ENCODE measurements at regions of chr10 and their contacts with region 1.

Region 1: DNA sequence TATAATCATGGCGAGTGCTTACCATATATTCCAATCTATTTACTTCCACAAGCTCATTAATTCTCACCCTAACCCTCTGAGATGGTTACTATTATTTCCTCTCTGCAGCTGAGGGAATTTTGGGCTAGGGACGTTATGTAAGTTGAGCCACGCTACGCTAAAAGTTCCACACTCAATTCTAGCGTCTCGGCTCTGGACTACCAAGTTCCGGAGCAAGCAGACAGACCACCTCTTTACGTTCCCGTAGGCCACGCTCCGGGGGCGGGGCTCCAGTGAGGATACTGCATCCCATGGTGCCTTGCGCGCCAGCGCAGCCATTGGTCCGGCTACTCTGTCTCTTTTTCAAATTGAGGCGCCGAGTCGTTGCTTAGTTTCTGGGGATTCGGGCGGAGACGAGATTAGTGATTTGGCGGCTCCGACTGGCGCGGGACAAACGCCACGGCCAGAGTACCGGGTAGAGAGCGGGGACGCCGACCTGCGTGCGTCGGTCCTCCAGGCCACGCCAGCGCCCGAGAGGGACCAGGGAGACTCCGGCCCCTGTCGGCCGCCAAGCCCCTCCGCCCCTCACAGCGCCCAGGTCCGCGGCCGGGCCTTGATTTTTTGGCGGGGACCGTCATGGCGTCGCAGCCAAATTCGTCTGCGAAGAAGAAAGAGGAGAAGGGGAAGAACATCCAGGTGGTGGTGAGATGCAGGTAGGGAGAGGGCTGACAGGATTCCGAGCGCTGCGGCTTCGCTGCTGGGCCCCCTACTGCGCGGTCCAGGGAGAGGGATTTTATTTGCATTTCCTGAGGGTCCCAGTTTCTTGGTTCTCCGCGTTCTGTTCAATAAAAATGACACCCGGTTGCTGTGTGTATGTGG is at the start of gene KIF11:
- DNase-seq: peak; percentile 96
- ATAC-seq: peak; percentile 82
- H3K4me3 ChIP-seq: peak within 1 kb of the TSS; percentile 65 to 95 (median 84)
- H3K4me3 Mint-ChIP-seq: peak within 1 kb of the TSS; percentile 99
- H3K27ac ChIP-seq: peak within 1 kb of the TSS; percentile 82 to 92
- H3K27ac Mint-ChIP-seq: peak within 1 kb of the TSS; percentile 99
- H3K4me1 ChIP-seq: peaks cover 9 to 22% of the 10 kb centered on the region in 2 donors
- H3K4me1 Mint-ChIP-seq: peaks cover 41% of the 10 kb centered on the region
- H3K27me3 ChIP-seq: no peaks in the 10 kb centered on the region
- H3K27me3 Mint-ChIP-seq: no peaks in the 10 kb centered on the region
- CTCF ChIP-seq: no peak
- total RNA-seq, gene KIF11: 1.8 and 2.0 TPM in 2 replicates

Region 2: DNA sequence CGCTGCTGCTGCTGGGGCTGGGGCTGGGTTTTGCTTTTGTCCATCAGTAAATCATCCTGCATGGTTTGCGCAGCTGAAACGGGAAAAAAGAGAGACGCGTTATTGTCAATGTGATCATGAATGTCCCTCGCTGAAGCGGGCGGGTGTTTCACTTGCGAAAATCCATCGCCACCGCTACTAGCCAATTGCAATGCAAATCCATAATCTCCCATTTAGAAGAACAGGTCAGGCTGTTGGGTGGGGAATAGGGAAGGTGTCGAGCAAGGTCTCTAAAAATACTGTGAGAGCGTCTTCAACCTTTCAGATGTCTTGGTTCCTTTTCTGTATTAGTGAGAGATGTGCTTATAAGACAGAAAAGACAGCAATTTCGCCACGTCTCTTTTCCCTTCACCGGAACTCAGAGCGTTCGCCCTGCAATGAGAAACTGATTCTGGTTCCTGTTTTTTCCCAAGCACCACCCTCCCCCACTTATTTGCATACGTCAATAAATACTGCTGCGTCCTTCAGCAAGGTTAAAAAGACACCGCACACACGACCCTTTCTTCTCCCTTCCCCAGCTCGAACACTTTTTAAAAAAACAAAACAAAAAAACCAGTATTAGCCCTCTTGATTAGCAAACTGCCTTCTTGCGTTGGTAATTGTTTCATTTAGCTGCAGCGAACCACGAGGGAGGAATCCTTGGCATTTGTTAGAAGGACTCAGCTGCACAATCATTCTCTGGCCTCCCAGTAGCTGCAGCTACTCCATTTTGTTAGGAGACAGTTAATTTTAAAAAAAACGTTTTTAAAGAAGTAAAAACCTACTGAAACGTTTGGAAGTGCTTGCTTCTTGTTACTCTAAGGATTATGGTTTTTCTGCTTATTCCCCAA is 352.5 kb before region 1 on chr10:
- CTCF ChIA-PET with region 1: no interaction called
- POLR2A ChIA-PET with region 1: no interaction called
- intact Hi-C with region 1: loop called (anchors 1 kb)
- DNase-seq: peak; percentile 83
- ATAC-seq: peak; percentile 72
- H3K4me3 ChIP-seq: peak overlapping the region; percentile 63 to 99 (median 91)
- H3K4me3 Mint-ChIP-seq: peak overlapping the region; percentile 96
- H3K27ac ChIP-seq: peak overlapping the region; percentile 7 to 37
- H3K27ac Mint-ChIP-seq: peak overlapping the region; percentile 93
- H3K4me1 ChIP-seq: peaks cover 19 to 30% of the 10 kb centered on the region in 2 donors
- H3K4me1 Mint-ChIP-seq: peaks cover 47% of the 10 kb centered on the region
- H3K27me3 ChIP-seq: no peaks in the 10 kb centered on the region
- H3K27me3 Mint-ChIP-seq: no peaks in the 10 kb centered on the region
- CTCF ChIP-seq: no peak

Region 3: GRCh38 chr10:92544296-92544695 is 48.7 kb before region 1 on chr10:
- CTCF ChIA-PET with region 1: no interaction called
- POLR2A ChIA-PET with region 1: no interaction called
- intact Hi-C with region 1: no loop called
- DNase-seq: peak; percentile 17
- ATAC-seq: peak; percentile 54
- H3K4me3 ChIP-seq: no peak overlapping the region
- H3K4me3 Mint-ChIP-seq: no peak overlapping the region
- H3K27ac ChIP-seq: no peak overlapping the region
- H3K27ac Mint-ChIP-seq: no peak overlapping the region
- H3K4me1 ChIP-seq: peaks cover 5 to 11% of the 10 kb centered on the region in 2 donors
- H3K4me1 Mint-ChIP-seq: peaks cover 32% of the 10 kb centered on the region
- H3K27me3 ChIP-seq: no peaks in the 10 kb centered on the region
- H3K27me3 Mint-ChIP-seq: no peaks in the 10 kb centered on the region
- CTCF ChIP-seq: no peak

Region 4: GRCh38 chr10:92640110-92640509 is 47.1 kb after region 1 on chr10:
- CTCF ChIA-PET with region 1: no interaction called
- POLR2A ChIA-PET with region 1: no interaction called
- intact Hi-C with region 1: loop called (anchors 1 kb)
- DNase-seq: no peak
- ATAC-seq: no peak
- H3K4me3 ChIP-seq: no peak overlapping the region
- H3K4me3 Mint-ChIP-seq: no peak overlapping the region
- H3K27ac ChIP-seq: no peak overlapping the region
- H3K27ac Mint-ChIP-seq: no peak overlapping the region
- H3K4me1 ChIP-seq: no peaks in the 10 kb centered on the region
- H3K4me1 Mint-ChIP-seq: peaks cover 10% of the 10 kb centered on the region
- H3K27me3 ChIP-seq: no peaks in the 10 kb centered on the region
- H3K27me3 Mint-ChIP-seq: no peaks in the 10 kb centered on the region
- CTCF ChIP-seq: no peak

Region 5: DNA sequence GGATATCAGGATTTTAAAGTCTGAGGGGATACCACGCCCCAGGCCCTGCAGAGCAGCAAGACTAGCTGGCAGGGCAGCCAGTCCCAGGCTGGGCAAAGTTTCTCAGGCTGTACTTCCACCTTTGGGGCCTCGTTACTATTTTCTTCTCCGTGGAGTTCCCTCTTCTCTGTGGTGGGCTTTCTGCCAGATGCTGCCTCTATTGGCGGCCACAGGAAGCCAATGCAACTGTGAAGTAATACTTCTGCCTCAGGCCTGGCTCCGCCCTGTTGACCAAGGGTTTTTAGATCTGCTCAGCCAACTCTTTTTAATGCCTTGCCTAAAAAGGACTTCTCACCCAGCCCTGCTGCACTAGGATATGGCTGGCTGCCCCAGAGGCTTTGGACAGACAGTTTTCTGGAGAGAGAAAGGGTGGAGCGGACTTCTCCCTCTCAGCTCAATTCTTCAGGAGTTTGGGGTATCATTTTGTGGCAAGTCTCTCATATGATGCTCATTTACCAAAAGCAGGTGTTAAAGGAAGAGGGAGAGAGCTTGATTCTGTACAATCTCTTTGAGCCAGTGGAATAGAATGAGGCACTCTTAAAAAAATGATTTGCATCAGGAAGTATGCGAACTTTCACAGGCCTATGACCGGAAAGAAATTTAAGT is 164.2 kb after region 1 on chr10:
- CTCF ChIA-PET with region 1: no interaction called
- POLR2A ChIA-PET with region 1: no interaction called
- intact Hi-C with region 1: loop called (anchors 1 kb)
- DNase-seq: peak; percentile 86
- ATAC-seq: peak; percentile 66
- H3K4me3 ChIP-seq: peak overlapping the region; percentile 16 to 36 (median 29)
- H3K4me3 Mint-ChIP-seq: peak overlapping the region; percentile 75
- H3K27ac ChIP-seq: peak overlapping the region; percentile 84 to 87
- H3K27ac Mint-ChIP-seq: peak overlapping the region; percentile 97
- H3K4me1 ChIP-seq: peaks cover 65 to 73% of the 10 kb centered on the region in 2 donors
- H3K4me1 Mint-ChIP-seq: peaks cover 75% of the 10 kb centered on the region
- H3K27me3 ChIP-seq: no peaks in the 10 kb centered on the region
- H3K27me3 Mint-ChIP-seq: no peaks in the 10 kb centered on the region
- CTCF ChIP-seq: peak; percentile 42

Region 6: GRCh38 chr10:92880233-92880861 is 287.4 kb after region 1 on chr10:
- CTCF ChIA-PET with region 1: interaction called, 11 read pairs
- POLR2A ChIA-PET with region 1: no interaction called
- intact Hi-C with region 1: loop called (anchors 1 kb)
- DNase-seq: peak; percentile 70
- ATAC-seq: peak; percentile 39
- H3K4me3 ChIP-seq: no peak overlapping the region
- H3K4me3 Mint-ChIP-seq: no peak overlapping the region
- H3K27ac ChIP-seq: no peak overlapping the region
- H3K27ac Mint-ChIP-seq: no peak overlapping the region
- H3K4me1 ChIP-seq: peaks cover 0 to 12% of the 10 kb centered on the region in 2 donors
- H3K4me1 Mint-ChIP-seq: peaks cover 29% of the 10 kb centered on the region
- H3K27me3 ChIP-seq: no peaks in the 10 kb centered on the region
- H3K27me3 Mint-ChIP-seq: no peaks in the 10 kb centered on the region
- CTCF ChIP-seq: peak; percentile 78

Region 7: DNA sequence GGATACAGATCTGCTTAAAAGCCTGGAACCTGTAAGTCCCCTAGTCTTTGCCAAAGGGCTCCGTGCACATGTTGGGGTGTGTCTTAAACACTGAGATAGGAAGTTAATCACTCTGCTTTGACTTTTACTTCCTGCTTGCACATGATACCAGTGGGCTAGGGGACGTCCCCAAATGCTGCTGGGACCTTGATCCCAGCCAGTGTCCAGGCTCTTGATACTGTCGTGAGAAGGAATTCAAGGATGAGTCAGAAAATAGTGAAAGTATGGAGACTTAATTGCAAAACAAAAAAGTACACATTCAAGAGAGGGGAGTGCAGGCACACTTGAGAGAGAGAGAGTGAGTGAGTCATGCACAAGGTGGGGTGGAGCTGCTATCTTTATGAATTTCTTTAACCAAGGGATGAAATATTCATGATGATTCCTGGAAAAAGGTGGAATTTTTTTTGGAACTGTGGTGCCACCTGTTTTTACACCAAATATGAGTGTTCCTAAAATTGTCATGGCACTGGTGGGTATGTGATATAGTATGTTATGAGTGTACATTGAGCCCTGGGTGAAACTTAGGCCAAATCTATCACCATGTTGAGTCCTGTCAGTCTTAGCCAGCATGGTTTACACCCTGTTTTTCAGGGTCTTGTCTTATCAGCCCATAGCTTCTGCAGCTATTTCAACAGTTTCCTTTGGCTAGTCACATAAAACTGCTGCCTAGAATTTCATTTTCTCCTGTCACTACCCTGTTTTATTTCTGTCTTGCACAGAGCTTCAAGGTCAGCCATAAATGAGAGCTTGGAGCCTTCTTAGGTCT is 379.3 kb after region 1 on chr10:
- CTCF ChIA-PET with region 1: no interaction called
- POLR2A ChIA-PET with region 1: no interaction called
- intact Hi-C with region 1: no loop called
- DNase-seq: no peak
- ATAC-seq: no peak
- H3K4me3 ChIP-seq: no peak overlapping the region
- H3K4me3 Mint-ChIP-seq: no peak overlapping the region
- H3K27ac ChIP-seq: no peak overlapping the region
- H3K27ac Mint-ChIP-seq: no peak overlapping the region
- H3K4me1 ChIP-seq: no peaks in the 10 kb centered on the region
- H3K4me1 Mint-ChIP-seq: no peaks in the 10 kb centered on the region
- H3K27me3 ChIP-seq: no peaks in the 10 kb centered on the region
- H3K27me3 Mint-ChIP-seq: no peaks in the 10 kb centered on the region
- CTCF ChIP-seq: no peak